K562 (cell line): ENCODE measurements at regions of chr14 and their contacts with region 1.

Region 1: GRCh38 chr14:49892636-49893308 is at the start of gene ARF6:
- DNase-seq: peak; percentile 87 to 96 (median 90)
- ATAC-seq: peak; percentile 82
- H3K4me3 ChIP-seq: peak within 1 kb of the TSS; percentile 75
- H3K27ac ChIP-seq: peak within 1 kb of the TSS; percentile 95
- H3K4me1 ChIP-seq: peaks cover 2 to 9% of the 10 kb centered on the region in 2 experiments; a peak in 4 of 5 replicates
- H3K27me3 ChIP-seq: no peaks in the 10 kb centered on the region
- CTCF ChIP-seq: peak in 2 of 3 experiments; percentile 7 to 41; a peak in 1 of 6 replicates
- EP300 ChIP-seq: no peak
- POLR2A ChIP-seq: peak; percentile 90
- RAD21 ChIP-seq: 0 out of 4 replicates have a peak, but pooled peaks of 1 of the 2 experiments have one; percentile 19
- polyA plus RNA-seq, gene ARF6: 15.3 to 32.5 TPM

Region 2: GRCh38 chr14:49862089-49862673 is 30.6 kb before region 1 on chr14:
- CTCF ChIA-PET with region 1: no interaction called
- POLR2A ChIA-PET with region 1: interaction called, 4 read pairs
- in situ Hi-C with region 1: no loop called
- intact Hi-C with region 1: loop called (anchors 2 kb)
- DNase-seq: peak; percentile 27 to 85 (median 41)
- ATAC-seq: peak; percentile 18
- H3K4me3 ChIP-seq: peak overlapping the region; percentile 58
- H3K27ac ChIP-seq: peak overlapping the region; percentile 98
- H3K4me1 ChIP-seq: peaks cover 7 to 29% of the 10 kb centered on the region in 2 experiments; a peak in 4 of 5 replicates
- H3K27me3 ChIP-seq: no peaks in the 10 kb centered on the region
- CTCF ChIP-seq: peak; percentile 100
- EP300 ChIP-seq: peak; percentile 14; the same call in 1 of the 2 replicates
- POLR2A ChIP-seq: no peak; the same call in 1 of the 2 replicates
- RAD21 ChIP-seq: peak; percentile 46 to 77

Region 3: DNA sequence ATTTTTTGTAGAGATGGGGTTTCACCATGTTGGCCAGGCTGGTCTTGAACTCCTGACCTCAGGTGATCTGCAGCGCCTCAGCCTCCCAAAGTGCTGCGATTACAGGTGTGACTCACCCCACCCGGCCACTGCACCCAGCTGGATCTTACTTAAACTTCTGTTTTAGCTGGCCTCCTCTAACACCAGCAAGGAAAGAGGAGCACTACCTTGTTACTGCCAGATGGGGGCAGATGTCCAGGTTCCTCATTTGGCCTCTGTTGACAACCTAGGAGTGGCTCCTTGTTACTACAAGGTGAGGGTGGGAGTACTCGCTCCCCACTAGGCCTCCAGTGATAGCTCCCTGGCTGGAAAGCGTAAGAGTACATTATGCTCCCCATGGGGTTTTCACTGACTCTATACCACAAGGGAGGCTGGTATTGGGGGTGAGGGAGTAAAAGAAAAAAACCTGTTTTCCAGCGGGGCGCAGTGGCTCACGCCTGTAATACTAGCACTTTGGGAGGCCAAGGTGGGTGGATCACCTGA is 13.0 kb before region 1 on chr14:
- CTCF ChIA-PET with region 1: no interaction called
- POLR2A ChIA-PET with region 1: interaction called, 12 read pairs
- in situ Hi-C with region 1: no loop called
- intact Hi-C with region 1: no loop called
- DNase-seq: peak; percentile 65 to 86 (median 69)
- ATAC-seq: peak; percentile 92
- H3K4me3 ChIP-seq: no peak overlapping the region
- H3K27ac ChIP-seq: peak overlapping the region; percentile 67; the same call in 2 of the 3 replicates
- H3K4me1 ChIP-seq: peaks cover 17 to 29% of the 10 kb centered on the region in 2 experiments
- H3K27me3 ChIP-seq: no peaks in the 10 kb centered on the region
- CTCF ChIP-seq: peak; percentile 74 to 82 (median 75)
- EP300 ChIP-seq: no peak
- POLR2A ChIP-seq: no peak
- RAD21 ChIP-seq: peak; percentile 50 to 72

Region 4: DNA sequence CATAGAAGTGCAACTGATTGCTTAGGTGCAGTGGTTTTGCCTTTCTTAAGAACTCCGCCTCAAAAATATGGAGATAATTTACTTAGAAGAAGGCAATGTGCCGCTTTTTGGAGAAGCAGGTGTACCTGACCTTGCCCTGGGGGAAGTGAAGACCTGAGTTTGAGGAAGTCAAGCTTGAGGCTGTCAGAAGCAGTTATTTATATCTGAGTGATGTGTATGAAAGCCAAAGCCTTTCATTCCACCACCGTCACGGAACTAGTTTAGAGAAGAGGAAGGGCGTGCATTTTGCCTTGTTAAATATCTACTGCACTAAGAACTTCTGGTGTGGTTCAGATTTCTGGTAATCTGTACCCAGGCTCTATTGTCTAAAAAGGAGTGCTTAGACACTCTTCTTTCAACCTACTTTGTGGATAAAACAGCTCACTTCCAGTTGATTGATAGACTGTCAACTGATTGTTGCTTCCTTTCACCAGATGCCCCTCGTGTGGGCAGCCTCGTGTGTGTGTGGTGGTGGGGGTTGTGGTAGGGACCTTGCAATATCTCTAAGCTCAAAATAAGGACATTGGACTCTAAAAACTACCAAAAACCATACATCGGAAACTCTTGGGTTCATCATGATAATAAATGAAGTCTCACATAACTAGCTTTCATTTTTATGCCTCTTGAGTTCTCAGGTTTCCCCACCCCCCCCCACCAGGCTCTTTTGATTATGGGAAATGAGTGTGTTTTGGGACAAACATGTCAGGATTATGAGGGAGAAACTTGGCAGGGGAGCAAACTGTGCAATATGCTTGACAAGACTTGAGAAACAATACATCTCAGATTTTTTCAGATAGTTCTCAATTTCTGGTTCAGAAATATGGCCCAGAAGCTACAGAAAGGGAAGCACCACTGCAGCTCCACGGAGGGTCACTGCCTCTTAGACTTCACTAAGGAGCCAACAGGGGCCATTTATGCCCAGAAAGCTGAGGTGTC is 78.7 kb after region 1 on chr14:
- CTCF ChIA-PET with region 1: no interaction called
- POLR2A ChIA-PET with region 1: interaction called, 4 read pairs
- in situ Hi-C with region 1: no loop called
- intact Hi-C with region 1: loop called (anchors 5 kb)
- DNase-seq: peak in 1 of 4 experiments; percentile 23
- ATAC-seq: peak; percentile 15
- H3K4me3 ChIP-seq: no peak overlapping the region
- H3K27ac ChIP-seq: peak overlapping the region; percentile 90; the same call in 1 of the 3 replicates
- H3K4me1 ChIP-seq: peaks cover 0 to 32% of the 10 kb centered on the region in 2 experiments; a peak in 4 of 5 replicates
- H3K27me3 ChIP-seq: no peaks in the 10 kb centered on the region
- CTCF ChIP-seq: no peak
- EP300 ChIP-seq: no peak
- POLR2A ChIP-seq: no peak
- RAD21 ChIP-seq: no peak; a peak in 1 of 4 replicates

Region 5: GRCh38 chr14:50003213-50004031 is 110.7 kb after region 1 on chr14:
- CTCF ChIA-PET with region 1: no interaction called
- POLR2A ChIA-PET with region 1: no interaction called
- in situ Hi-C with region 1: no loop called
- intact Hi-C with region 1: loop called (anchors 1 kb)
- DNase-seq: peak; percentile 92 to 94 (median 94)
- ATAC-seq: peak; percentile 84
- H3K4me3 ChIP-seq: peak overlapping the region; percentile 46
- H3K27ac ChIP-seq: peak overlapping the region; percentile 92
- H3K4me1 ChIP-seq: peaks cover 50 to 54% of the 10 kb centered on the region in 2 experiments
- H3K27me3 ChIP-seq: no peaks in the 10 kb centered on the region
- CTCF ChIP-seq: peak in 1 of 3 experiments; percentile 36; a peak in 1 of 6 replicates
- EP300 ChIP-seq: peak; percentile 85
- POLR2A ChIP-seq: peak; percentile 75
- RAD21 ChIP-seq: peak; percentile 36 to 41; a peak in 3 of 4 replicates

Region 6: GRCh38 chr14:50060871-50061663 is 168.3 kb after region 1 on chr14:
- CTCF ChIA-PET with region 1: no interaction called
- POLR2A ChIA-PET with region 1: no interaction called
- in situ Hi-C with region 1: no loop called
- intact Hi-C with region 1: loop called (anchors 1 kb)
- DNase-seq: peak; percentile 60 to 82 (median 71)
- ATAC-seq: peak; percentile 72
- H3K4me3 ChIP-seq: no peak overlapping the region
- H3K27ac ChIP-seq: peak overlapping the region; percentile 90
- H3K4me1 ChIP-seq: peaks cover 39 to 68% of the 10 kb centered on the region in 2 experiments
- H3K27me3 ChIP-seq: no peaks in the 10 kb centered on the region
- CTCF ChIP-seq: peak; percentile 8 to 17 (median 10); a peak in 1 of 6 replicates
- EP300 ChIP-seq: peak; percentile 81
- POLR2A ChIP-seq: no peak
- RAD21 ChIP-seq: no peak; a peak in 1 of 4 replicates